GM12878 (cell line): ENCODE measurements at regions of chr14 and their contacts with region 1.

Region 1: DNA sequence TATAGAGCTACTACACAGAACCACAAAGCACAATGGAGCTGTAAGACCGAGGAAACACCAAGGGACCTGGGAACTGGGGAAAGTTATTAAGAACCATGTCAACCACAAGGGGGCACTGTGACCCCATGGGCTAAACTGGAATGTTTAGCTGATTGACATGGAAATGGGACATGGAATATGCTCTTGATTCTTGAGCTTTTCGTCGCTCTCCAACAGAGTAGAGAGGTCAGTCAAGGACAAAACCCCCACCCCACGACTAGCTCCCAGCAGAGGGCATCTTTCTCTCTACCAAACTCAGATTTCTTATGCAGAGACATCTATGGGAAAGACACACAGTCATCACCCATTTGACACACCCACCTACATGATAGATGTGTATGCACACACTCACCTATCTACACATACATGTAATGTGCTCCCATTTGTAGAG is 10.1 kb downstream of the NDRG2 start:
- DNase-seq: peak; percentile 25
- ATAC-seq: peak; percentile 91
- H3K4me3 ChIP-seq: no peak overlapping the region
- H3K27ac ChIP-seq: no peak overlapping the region
- H3K4me1 ChIP-seq: no peaks in the 10 kb centered on the region
- H3K27me3 ChIP-seq: peaks cover 0 to 5% of the 10 kb centered on the region in 2 experiments; a peak in 2 of 4 replicates
- CTCF ChIP-seq: peak; percentile 79 to 93 (median 88); a peak in 5 of 6 replicates
- EP300 ChIP-seq: no peak
- POLR2A ChIP-seq: no peak
- RAD21 ChIP-seq: peak; percentile 94

Region 2: GRCh38 chr14:21003788-21004346 is 10.9 kb before region 1 on chr14:
- CTCF ChIA-PET with region 1: interaction called, 62 read pairs
- POLR2A ChIA-PET with region 1: no interaction called
- RAD21 ChIA-PET with region 1: interaction called, 11 read pairs
- SMC1A ChIA-PET with region 1: interaction called, 8 read pairs
- in situ Hi-C with region 1: no loop called
- intact Hi-C with region 1: no loop called
- DNase-seq: no peak
- ATAC-seq: no peak
- H3K4me3 ChIP-seq: no peak overlapping the region
- H3K27ac ChIP-seq: no peak overlapping the region
- H3K4me1 ChIP-seq: no peaks in the 10 kb centered on the region
- H3K27me3 ChIP-seq: no peaks in the 10 kb centered on the region
- CTCF ChIP-seq: no peak
- EP300 ChIP-seq: no peak
- POLR2A ChIP-seq: no peak
- RAD21 ChIP-seq: no peak

Region 3: GRCh38 chr14:21039585-21040369 is 25.0 kb after region 1 on chr14:
- CTCF ChIA-PET with region 1: interaction called, 57 read pairs
- POLR2A ChIA-PET with region 1: interaction called, 9 read pairs
- RAD21 ChIA-PET with region 1: interaction called, 24 read pairs
- SMC1A ChIA-PET with region 1: interaction called, 36 read pairs
- in situ Hi-C with region 1: no loop called
- intact Hi-C with region 1: loop called (anchors 1 kb)
- DNase-seq: no peak
- ATAC-seq: peak; percentile 87
- H3K4me3 ChIP-seq: no peak overlapping the region
- H3K27ac ChIP-seq: no peak overlapping the region
- H3K4me1 ChIP-seq: peaks cover 8% of the 10 kb centered on the region
- H3K27me3 ChIP-seq: peaks cover 0 to 7% of the 10 kb centered on the region in 2 experiments; a peak in 2 of 4 replicates
- CTCF ChIP-seq: peak; percentile 53 to 60 (median 60)
- EP300 ChIP-seq: no peak
- POLR2A ChIP-seq: no peak
- RAD21 ChIP-seq: peak; percentile 64

Region 4: GRCh38 chr14:21071225-21072030 is 56.7 kb after region 1 on chr14:
- CTCF ChIA-PET with region 1: interaction called, 68 read pairs
- POLR2A ChIA-PET with region 1: interaction called, 7 read pairs
- RAD21 ChIA-PET with region 1: interaction called, 26 read pairs
- SMC1A ChIA-PET with region 1: interaction called, 11 read pairs
- in situ Hi-C with region 1: no loop called
- intact Hi-C with region 1: loop called (anchors 2 kb)
- DNase-seq: peak; percentile 51
- ATAC-seq: peak; percentile 82
- H3K4me3 ChIP-seq: peak overlapping the region; percentile 67
- H3K27ac ChIP-seq: no peak overlapping the region
- H3K4me1 ChIP-seq: peaks cover 29% of the 10 kb centered on the region
- H3K27me3 ChIP-seq: peaks cover 9 to 20% of the 10 kb centered on the region in 2 experiments
- CTCF ChIP-seq: no peak
- EP300 ChIP-seq: no peak
- POLR2A ChIP-seq: no peak
- RAD21 ChIP-seq: no peak

Region 5: DNA sequence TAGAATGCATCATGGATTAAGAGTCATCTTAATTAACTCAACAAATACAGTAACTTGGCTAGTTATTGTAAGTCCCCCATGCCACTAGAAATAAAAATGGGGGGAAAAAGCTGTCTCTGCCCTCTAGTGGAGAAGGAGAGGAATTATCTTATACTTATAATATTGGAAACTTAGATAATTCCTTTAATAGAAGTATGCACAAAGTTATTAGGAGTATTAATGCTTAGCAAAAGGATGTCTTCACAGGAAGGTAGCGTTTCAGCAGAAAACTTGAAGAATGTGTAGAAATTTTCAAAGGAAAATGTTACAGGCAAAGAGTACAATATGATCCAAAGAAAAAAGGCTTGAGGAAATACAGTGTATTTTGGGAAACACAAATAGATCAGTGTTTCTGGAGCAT is 121.2 kb after region 1 on chr14:
- CTCF ChIA-PET with region 1: interaction called, 14 read pairs
- POLR2A ChIA-PET with region 1: no interaction called
- RAD21 ChIA-PET with region 1: interaction called, 6 read pairs
- SMC1A ChIA-PET with region 1: interaction called, 6 read pairs
- in situ Hi-C with region 1: no loop called
- intact Hi-C with region 1: no loop called
- DNase-seq: no peak
- ATAC-seq: peak; percentile 44; the same call in 1 of the 3 replicates
- H3K4me3 ChIP-seq: no peak overlapping the region
- H3K27ac ChIP-seq: no peak overlapping the region
- H3K4me1 ChIP-seq: no peaks in the 10 kb centered on the region
- H3K27me3 ChIP-seq: no peaks in the 10 kb centered on the region
- CTCF ChIP-seq: peak; percentile 53 to 57 (median 55)
- EP300 ChIP-seq: no peak
- POLR2A ChIP-seq: no peak
- RAD21 ChIP-seq: peak; percentile 56